B cell (primary cell): ENCODE measurements at regions of chr5 and their contacts with region 1.

Region 1: GRCh38 chr5:132753135-132753987 is 6.1 kb downstream of the CCNI2 start:
- DNase-seq: no peak
- ATAC-seq: no peak
- H3K4me3 ChIP-seq: no peak overlapping the region
- H3K4me3 Mint-ChIP-seq: no peak overlapping the region
- H3K27ac ChIP-seq: no peak overlapping the region
- H3K27ac Mint-ChIP-seq: no peak overlapping the region
- H3K4me1 ChIP-seq: no peaks in the 10 kb centered on the region
- H3K4me1 Mint-ChIP-seq: peaks cover 12% of the 10 kb centered on the region
- H3K27me3 ChIP-seq: peaks cover 0 to 3% (median 0%) of the 10 kb centered on the region in 4 experiments
- H3K27me3 Mint-ChIP-seq: peaks cover 4% of the 10 kb centered on the region
- CTCF ChIP-seq: no peak

Region 2: DNA sequence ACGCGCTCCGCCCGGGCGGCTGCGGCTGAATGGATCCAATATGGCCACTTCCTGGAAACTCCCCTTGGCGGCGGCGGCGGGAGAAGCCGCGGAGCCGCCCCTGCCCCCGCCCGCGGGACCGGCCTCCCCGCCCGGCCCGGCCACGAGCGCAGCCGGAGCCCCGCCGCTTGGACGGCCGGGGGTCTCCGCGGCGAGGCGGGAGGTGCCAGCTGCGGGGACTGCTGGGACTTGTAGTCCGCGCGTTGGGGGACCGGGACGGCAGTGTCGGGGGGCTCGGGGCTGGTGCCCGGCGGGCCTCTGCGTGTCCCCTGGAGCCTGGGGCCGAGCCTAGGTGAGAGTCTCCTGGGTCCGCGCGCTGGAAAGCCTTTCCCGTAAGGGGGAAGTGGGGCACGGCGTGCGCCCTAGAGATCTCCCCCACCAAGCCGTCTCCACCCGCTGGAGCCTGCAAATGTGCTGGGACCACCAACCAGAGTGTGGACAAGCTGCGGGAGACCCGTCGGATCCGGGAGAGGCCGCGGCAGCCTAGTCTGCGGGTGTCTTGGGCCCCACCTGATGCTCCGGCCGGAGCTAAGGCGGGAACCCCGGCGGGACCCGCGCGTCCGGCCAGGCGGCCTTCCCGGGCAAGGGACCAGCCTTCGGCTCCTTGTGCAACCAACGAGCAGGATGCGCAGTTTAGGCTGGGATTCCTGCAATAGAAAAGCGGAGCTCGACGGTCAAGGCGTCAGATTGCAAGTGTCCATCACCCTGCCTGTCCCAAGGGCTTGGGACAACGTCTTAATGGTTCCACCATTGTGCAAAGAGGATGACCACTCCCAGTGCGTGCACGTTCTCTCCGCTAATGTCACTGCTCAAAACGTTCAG is 24.1 kb after region 1 on chr5 and contains the start of gene SEPTIN8:
- CTCF ChIA-PET with region 1: no interaction called
- POLR2A ChIA-PET with region 1: interaction called, 11 read pairs
- intact Hi-C with region 1: no loop called
- DNase-seq: peak; percentile 67
- ATAC-seq: peak; percentile 68
- H3K4me3 ChIP-seq: peak within 1 kb of the TSS in 4 of 5 experiments; percentile 58 to 82 (median 64)
- H3K4me3 Mint-ChIP-seq: peak within 1 kb of the TSS; percentile 76
- H3K27ac ChIP-seq: no peak within 1 kb of the TSS
- H3K27ac Mint-ChIP-seq: no peak within 1 kb of the TSS
- H3K4me1 ChIP-seq: peaks cover 14 to 16% of the 10 kb centered on the region in 2 donors
- H3K4me1 Mint-ChIP-seq: peaks cover 8% of the 10 kb centered on the region
- H3K27me3 ChIP-seq: peaks cover 2 to 43% (median 35%) of the 10 kb centered on the region in 4 experiments
- H3K27me3 Mint-ChIP-seq: peaks cover 40% of the 10 kb centered on the region
- CTCF ChIP-seq: no peak
- total RNA-seq, gene SEPTIN8: 3.9 and 5.9 TPM in 2 replicates

Region 3: DNA sequence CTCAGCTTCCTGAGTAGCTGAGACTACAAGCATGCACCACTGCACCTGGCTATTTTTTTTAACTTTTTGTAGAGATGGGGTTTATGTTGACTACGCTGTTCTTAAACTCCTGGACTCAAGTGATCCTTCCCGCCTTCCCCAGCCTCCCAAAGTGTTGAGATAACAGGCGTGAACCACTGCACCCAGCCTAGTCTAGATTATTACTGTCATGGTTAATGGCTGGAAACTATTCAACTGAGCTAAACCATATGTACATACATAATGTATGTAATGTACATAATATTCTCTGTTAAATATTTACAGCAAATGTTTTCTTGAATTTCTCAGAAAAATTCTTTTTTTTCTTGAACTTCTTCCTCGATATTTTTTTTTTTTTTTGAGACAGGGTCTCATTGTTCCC is 1451.2 kb after region 1 on chr5:
- CTCF ChIA-PET with region 1: no interaction called
- POLR2A ChIA-PET with region 1: no interaction called
- intact Hi-C with region 1: no loop called
- DNase-seq: no peak
- ATAC-seq: no peak
- H3K4me3 ChIP-seq: no peak overlapping the region
- H3K4me3 Mint-ChIP-seq: no peak overlapping the region
- H3K27ac ChIP-seq: no peak overlapping the region
- H3K27ac Mint-ChIP-seq: no peak overlapping the region
- H3K4me1 ChIP-seq: peaks cover 3 to 5% of the 10 kb centered on the region in 2 donors
- H3K4me1 Mint-ChIP-seq: peaks cover 31% of the 10 kb centered on the region
- H3K27me3 ChIP-seq: no peaks in the 10 kb centered on the region
- H3K27me3 Mint-ChIP-seq: no peaks in the 10 kb centered on the region
- CTCF ChIP-seq: no peak